GM18951 (cell line): ENCODE measurements at regions of chr19 and their contacts with region 1.

Region 1: DNA sequence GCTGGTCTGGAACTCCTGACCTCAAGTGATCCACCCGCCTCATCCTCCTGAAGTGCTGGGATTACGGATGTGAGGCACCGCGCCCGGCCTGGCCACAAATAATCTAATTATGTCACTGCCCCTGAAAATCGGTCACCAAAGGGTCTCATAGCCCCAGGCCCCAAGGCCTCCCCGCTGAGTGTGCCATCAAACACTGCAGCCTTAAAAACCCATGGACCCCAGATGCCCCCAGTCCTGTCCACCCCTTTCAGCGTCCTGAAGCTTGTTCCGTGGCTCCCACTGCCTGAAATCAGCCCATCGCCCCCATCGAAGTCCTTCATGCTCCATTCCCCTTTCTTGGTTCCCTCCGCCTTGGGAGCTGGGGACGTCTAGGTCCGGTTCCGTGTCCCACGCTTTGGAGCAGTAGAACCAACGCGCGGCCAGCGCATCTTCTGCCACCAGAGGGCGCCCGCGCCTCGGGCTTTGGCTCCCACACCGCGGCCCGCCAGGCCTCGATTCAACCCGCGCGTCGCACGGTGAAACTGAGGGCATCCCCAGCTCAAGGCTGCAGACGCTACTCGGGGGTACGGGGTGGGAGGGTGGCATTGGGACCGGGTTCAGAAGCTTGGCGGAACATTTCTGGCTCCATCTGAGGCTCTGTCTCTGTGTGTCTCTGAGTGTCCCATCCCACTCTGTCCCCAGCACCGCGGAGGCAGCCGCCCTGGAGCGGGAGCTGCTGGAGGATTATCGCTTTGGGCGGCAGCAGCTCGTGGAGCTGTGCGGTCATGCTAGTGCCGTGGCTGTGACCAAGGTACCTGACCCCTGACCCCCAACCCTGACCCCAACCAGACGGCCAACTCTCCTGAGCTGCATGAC is 3.5 kb downstream of the YJEFN3 start:
- POLR2A ChIP-seq: peak; percentile 19

Region 2: GRCh38 chr19:19643158-19644053 is 111.2 kb after region 1 on chr19 and contains the start of gene GMIP:
- in situ Hi-C with region 1: loop called (anchors 5 kb)
- POLR2A ChIP-seq: peak; percentile 78

Region 3: DNA sequence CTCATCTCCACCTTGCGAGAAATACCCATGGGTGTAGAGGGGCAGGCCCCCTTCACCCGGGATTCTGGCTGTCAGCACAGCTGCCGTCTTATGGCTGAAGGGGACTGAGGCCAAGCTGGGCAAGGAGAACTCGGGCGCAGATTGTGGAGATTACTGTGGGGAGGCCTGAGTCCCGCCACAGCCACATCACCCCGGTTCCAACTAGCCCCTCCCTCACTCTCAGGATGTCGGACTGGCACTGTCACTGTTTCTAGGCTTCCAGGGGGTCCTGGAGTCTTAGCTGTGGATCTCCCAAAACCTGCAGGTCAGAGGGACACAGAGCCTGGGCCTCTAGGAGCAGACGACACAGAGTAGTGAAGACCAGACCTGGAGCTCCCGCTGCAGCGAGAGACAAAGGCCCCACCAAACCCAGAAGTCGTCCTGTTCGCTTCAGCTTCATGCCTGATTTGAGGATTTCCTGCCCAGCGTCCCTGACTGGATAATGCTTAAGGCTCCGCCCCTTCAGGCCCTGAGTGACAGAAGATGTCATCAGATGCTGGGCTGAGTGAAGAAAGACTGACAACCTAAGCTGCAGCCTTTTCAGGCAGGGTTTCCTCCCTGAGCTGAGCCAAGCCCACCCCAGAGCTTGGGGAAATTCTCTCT is 424.4 kb after region 1 on chr19:
- in situ Hi-C with region 1: loop called (anchors 25 kb)
- POLR2A ChIP-seq: no peak